ENCODE measurements at regions of chr1 and their contacts with region 1.

Region 1: DNA sequence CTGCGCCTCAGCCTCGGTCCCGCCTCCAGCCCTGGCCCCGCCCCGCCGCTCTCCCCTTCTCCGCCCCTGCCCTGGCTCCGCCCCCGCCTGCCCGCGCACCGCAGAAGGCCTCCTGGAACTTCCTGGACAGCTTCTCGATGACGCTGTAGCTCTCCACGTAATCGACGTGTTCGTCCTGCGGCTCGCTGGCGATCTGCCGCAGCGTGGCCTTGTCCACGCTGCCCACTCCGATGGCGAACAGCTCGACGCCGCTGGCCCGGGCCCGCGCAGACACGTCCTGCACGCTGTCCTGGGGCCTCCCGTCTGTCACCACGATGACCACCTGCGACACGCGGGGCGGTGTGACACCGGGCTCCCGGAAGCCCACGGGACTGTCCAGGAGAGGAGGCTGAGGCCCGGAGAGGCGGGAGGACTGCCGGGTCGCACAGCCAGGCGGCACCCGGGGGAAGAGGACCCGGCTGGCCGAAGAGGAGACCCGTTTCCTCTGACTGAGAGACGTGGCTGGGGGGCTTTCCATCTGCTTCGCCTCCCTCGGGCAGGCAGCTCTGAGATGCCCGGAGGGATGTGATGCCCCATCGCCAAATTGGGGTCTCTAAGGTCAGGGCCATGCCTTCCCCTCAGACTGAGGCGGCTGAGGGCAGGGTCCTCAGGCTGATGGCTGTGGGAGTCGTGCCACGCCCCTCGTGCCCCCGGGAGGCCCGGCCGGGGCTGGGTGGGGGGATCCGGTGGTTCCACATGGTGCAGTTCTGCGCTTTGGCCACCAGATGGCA is 4.6 kb downstream of the MATN1 start:
- DNase-seq: peak in 1 of 2 experiments; percentile 97
- H3K4me3 ChIP-seq: peak overlapping the region; percentile 35 to 67 (median 56)
- H3K27ac ChIP-seq: no peak overlapping the region
- H3K4me1 ChIP-seq: peaks cover 0 to 4% (median 1%) of the 10 kb centered on the region in 4 experiments; a peak in 4 of 7 replicates
- H3K27me3 ChIP-seq: no peaks in the 10 kb centered on the region; a peak in 1 of 7 replicates
- CTCF ChIP-seq: peak in 1 of 3 experiments; percentile 89; a peak in 1 of 4 replicates
- EP300 ChIP-seq: no peak
- POLR2A ChIP-seq: no peak
- RAD21 ChIP-seq: peak; percentile 98 to 99; a peak in 2 of 4 replicates

Region 2: DNA sequence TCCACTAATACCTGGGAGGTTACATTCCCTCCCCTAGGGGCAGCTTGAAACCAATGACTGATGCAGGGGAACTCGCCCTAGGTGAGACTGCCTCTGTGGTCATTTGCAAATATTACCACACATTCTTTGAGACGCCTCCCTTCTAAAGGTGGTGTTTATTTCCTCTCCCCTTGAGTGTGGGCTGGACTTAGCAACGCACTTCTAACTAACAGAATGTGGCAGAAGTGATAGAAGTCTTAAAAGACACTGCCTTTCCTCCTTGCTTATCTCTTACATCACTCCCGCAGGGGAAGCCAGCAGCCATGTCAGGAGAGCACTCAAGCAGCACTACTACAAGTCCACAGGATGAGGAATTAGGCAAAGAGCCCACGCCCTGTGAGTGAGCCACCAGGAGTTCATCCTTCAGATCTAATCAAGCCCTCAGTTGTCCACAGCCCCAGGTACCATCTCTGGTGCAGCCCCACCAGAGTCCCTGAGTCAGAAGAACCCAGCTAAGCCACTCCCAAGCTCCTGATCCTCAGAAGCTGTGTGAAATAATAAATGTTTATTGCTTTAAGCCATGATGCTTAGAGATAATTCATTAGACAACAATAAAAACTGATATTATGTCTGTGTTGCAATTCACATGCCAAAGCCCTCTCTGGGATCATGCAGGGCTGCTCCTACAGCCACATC is 19.4 kb after region 1 on chr1:
- CTCF ChIA-PET with region 1: interaction called, 1,640 read pairs
- POLR2A ChIA-PET with region 1: no interaction called
- DNase-seq: no peak
- H3K4me3 ChIP-seq: no peak overlapping the region
- H3K27ac ChIP-seq: no peak overlapping the region
- H3K4me1 ChIP-seq: peaks cover 0 to 3% (median 0%) of the 10 kb centered on the region in 4 experiments; a peak in 2 of 7 replicates
- H3K27me3 ChIP-seq: no peaks in the 10 kb centered on the region
- CTCF ChIP-seq: peak in 2 of 3 experiments; percentile 49 to 71; a peak in 3 of 4 replicates
- EP300 ChIP-seq: no peak
- POLR2A ChIP-seq: no peak
- RAD21 ChIP-seq: peak in 1 of 2 experiments; percentile 23; a peak in 1 of 4 replicates

Region 3: DNA sequence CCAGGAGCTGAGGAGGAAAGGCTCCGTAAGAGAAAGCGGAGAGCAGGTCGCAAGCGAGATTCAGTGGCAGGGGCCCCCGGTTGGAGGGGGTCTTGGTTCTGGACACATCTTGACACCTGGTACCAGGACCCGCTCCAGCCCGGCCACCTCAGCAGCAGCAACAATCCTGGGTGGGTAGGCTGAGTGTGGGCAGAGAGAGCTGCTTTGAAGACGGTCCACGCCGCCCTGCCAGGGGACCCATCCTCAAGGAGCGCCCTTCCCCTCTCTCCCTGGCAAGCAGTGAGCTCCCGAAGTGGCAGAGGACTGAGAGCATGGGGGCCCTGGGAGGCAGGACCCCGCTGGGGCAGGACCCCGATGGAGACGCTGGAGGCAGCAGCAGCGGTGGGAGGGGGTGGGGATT is 74.4 kb after region 1 on chr1:
- CTCF ChIA-PET with region 1: interaction called, 1,640 read pairs
- POLR2A ChIA-PET with region 1: no interaction called
- DNase-seq: no peak
- H3K4me3 ChIP-seq: no peak overlapping the region
- H3K27ac ChIP-seq: no peak overlapping the region
- H3K4me1 ChIP-seq: no peaks in the 10 kb centered on the region; a peak in 2 of 7 replicates
- H3K27me3 ChIP-seq: peaks cover 0 to 1% (median 0%) of the 10 kb centered on the region in 4 experiments; a peak in 1 of 7 replicates
- CTCF ChIP-seq: no peak
- EP300 ChIP-seq: no peak
- POLR2A ChIP-seq: no peak
- RAD21 ChIP-seq: no peak

Region 4: GRCh38 chr1:30902182-30902581 is 183.4 kb after region 1 on chr1:
- CTCF ChIA-PET with region 1: interaction called, 12 read pairs
- POLR2A ChIA-PET with region 1: no interaction called
- DNase-seq: no peak
- H3K4me3 ChIP-seq: no peak overlapping the region
- H3K27ac ChIP-seq: no peak overlapping the region
- H3K4me1 ChIP-seq: peaks cover 4 to 26% (median 12%) of the 10 kb centered on the region in 4 experiments
- H3K27me3 ChIP-seq: peaks cover 0 to 8% (median 4%) of the 10 kb centered on the region in 4 experiments; a peak in 4 of 7 replicates
- CTCF ChIP-seq: no peak
- EP300 ChIP-seq: no peak
- POLR2A ChIP-seq: no peak
- RAD21 ChIP-seq: no peak

Region 5: DNA sequence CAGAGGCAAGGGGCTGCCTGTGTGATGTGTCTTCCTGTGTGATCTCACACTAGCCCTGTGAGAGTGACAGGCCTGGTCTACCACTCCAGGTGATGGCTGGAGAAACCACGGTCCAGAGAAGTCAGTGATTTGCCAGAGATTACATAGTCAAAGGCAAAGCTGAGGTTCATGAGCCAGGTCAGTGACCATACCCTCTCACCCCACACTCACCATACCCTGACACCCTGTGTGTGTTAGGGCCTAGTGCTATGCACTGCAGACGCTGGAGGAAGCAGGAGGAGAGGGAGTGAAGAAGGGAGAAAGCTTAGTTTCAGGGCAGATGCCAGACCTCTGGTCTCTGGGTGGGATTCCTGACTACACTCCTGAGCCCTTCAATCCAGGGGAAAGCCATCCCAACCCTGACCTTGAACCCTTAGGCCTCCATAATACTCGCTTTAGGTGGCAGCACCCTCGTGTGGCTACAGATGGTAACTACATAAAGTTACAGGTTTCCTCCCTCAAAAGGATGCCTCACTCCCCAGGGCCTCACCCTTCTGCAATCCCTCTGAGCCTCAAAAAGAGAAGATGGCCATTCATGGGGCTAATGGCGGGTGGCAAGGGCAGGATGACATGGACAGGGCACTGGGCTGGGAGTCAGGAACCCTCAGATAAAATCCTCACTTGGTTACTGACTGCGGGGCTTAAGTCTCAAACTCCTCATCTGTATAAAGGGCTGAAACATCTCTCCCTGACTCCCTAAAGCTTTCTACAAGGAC is 210.5 kb after region 1 on chr1:
- CTCF ChIA-PET with region 1: interaction called, 36 read pairs
- POLR2A ChIA-PET with region 1: no interaction called
- DNase-seq: peak; percentile 25 to 86
- H3K4me3 ChIP-seq: no peak overlapping the region
- H3K27ac ChIP-seq: no peak overlapping the region
- H3K4me1 ChIP-seq: no peaks in the 10 kb centered on the region
- H3K27me3 ChIP-seq: no peaks in the 10 kb centered on the region
- CTCF ChIP-seq: peak; percentile 47 to 86 (median 69)
- EP300 ChIP-seq: no peak
- POLR2A ChIP-seq: no peak
- RAD21 ChIP-seq: peak; percentile 83 to 88